Breast epithelium (tissue), 4 donors: ENCODE measurements at regions of chrX and their contacts with region 1.

Region 1: GRCh38 chrX:29172880-29173279 is 585.6 kb downstream of the IL1RAPL1 start:
- DNase-seq: no peak
- H3K4me3 ChIP-seq: no peak overlapping the region
- H3K27ac ChIP-seq: no peak overlapping the region
- H3K4me1 ChIP-seq: no peaks in the 10 kb centered on the region
- H3K27me3 ChIP-seq: no peaks in the 10 kb centered on the region
- CTCF ChIP-seq: no peak
- POLR2A ChIP-seq: no peak

Region 2: DNA sequence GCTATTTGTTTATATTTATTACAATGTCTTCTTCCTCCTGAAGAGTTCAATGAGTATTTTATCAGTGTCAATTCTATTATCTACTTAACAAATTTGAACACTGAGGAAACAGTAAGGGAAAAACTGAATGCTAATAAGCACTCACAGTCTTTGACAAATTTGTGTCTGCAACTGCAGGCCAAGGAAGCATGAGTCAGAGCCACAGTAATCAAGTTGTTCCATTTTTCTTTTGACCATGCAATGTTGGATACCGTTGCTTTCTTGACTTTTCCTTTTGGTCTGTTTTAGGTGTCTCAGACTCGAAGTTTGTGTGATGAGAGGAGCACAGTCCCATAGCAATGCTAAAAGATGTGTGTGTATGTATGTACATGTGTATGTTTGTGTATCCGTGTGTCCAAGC is 226.0 kb before region 1 on chrX:
- intact Hi-C with region 1: loop called (anchors 5 kb)
- DNase-seq: no peak
- H3K4me3 ChIP-seq: no peak overlapping the region
- H3K27ac ChIP-seq: no peak overlapping the region
- H3K4me1 ChIP-seq: no peaks in the 10 kb centered on the region
- H3K27me3 ChIP-seq: no peaks in the 10 kb centered on the region
- CTCF ChIP-seq: no peak
- POLR2A ChIP-seq: no peak

Region 3: GRCh38 chrX:29155286-29155685 is 17.6 kb before region 1 on chrX:
- intact Hi-C with region 1: loop called (anchors 2 kb)
- DNase-seq: no peak
- H3K4me3 ChIP-seq: no peak overlapping the region
- H3K27ac ChIP-seq: no peak overlapping the region
- H3K4me1 ChIP-seq: no peaks in the 10 kb centered on the region
- H3K27me3 ChIP-seq: peaks cover 2 to 4% of the 10 kb centered on the region in 2 donors
- CTCF ChIP-seq: no peak
- POLR2A ChIP-seq: no peak